CD14-positive monocyte (primary cell): ENCODE measurements at regions of chr19 and their contacts with region 1.

Region 1: DNA sequence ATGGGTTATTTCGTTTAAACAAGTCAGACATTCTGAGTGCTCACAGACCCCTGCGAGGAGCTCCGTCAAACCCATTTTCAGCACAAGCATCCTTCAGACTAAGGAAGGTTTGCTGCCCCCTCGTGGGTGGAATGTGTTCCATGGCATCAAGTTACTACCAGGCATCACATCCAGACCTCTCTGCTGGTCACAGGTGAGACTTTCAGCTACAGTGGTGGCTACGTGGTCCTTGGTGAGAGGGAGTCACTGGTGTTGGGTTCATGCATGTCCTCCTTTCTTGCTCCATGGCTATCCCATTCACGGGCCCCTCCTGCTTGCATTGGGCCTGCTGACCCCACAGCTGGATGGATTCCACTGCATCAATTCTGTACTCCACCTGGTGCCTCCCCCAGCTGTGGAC is 9.1 kb upstream of the LILRB5 start:
- DNase-seq: peak; percentile 71 to 81 (median 77)
- H3K4me3 ChIP-seq: no peak overlapping the region
- H3K4me3 Mint-ChIP-seq: peak overlapping the region in 1 of 2 donors; percentile 20
- H3K27ac ChIP-seq: no peak overlapping the region
- H3K27ac Mint-ChIP-seq: peak overlapping the region in 3 of 7 donors; percentile 30 to 84 (median 48)
- H3K4me1 ChIP-seq: peaks cover 35 to 53% of the 10 kb centered on the region in 2 donors
- H3K4me1 Mint-ChIP-seq: peaks cover 39% of the 10 kb centered on the region
- H3K27me3 ChIP-seq: no peaks in the 10 kb centered on the region
- H3K27me3 Mint-ChIP-seq: peaks cover 0 to 2% (median 0%) of the 10 kb centered on the region in 3 donors
- CTCF ChIP-seq: peak; percentile 88

Region 2: GRCh38 chr19:54316746-54317107 is 50.6 kb after region 1 on chr19:
- intact Hi-C with region 1: loop called in 1 of 2 experiments (anchors 10 kb)
- DNase-seq: peak; percentile 70 to 77 (median 73)
- H3K4me3 ChIP-seq: peak overlapping the region in 1 of 3 experiments; percentile 62
- H3K4me3 Mint-ChIP-seq: peak overlapping the region; percentile 61 to 80
- H3K27ac ChIP-seq: peak overlapping the region; percentile 82 to 88
- H3K27ac Mint-ChIP-seq: peak overlapping the region; percentile 95 to 99 (median 98)
- H3K4me1 ChIP-seq: peaks cover 66 to 70% of the 10 kb centered on the region in 2 donors
- H3K4me1 Mint-ChIP-seq: peaks cover 65% of the 10 kb centered on the region
- H3K27me3 ChIP-seq: no peaks in the 10 kb centered on the region
- H3K27me3 Mint-ChIP-seq: peaks cover 3 to 8% (median 4%) of the 10 kb centered on the region in 3 donors
- CTCF ChIP-seq: no peak